Activated CD4-positive, alpha-beta memory T cell treated with anti-CD3 and anti-CD28 coated beads for 36 hours (primary cell): ENCODE measurements at regions of chrX and their contacts with region 1.

Region 1: DNA sequence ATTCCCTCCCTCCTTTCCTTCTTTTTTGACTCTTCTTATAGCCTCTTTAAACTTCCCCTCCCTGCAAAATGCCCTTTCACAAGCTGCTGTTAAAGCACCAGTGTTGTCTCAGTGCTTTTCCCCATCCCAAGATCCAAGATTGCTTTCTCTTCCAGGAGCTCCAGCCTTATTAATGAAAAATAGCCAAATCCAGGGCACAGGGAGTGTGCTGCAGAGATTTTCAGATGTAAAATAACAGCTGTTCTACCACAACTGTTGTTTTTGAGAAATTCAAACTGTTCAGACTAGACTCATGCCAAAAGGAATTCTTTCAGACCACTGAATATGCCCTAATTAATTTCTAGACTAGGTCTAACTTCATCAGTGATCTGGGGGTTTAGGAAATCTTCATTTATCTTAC is 47.0 kb upstream of the GPC3 start:
- DNase-seq: no peak
- H3K4me3 Mint-ChIP-seq: no peak overlapping the region
- H3K27ac Mint-ChIP-seq: no peak overlapping the region
- H3K4me1 Mint-ChIP-seq: no peaks in the 10 kb centered on the region
- H3K27me3 Mint-ChIP-seq: no peaks in the 10 kb centered on the region

Region 2: GRCh38 chrX:134020910-134021309 is 11.5 kb before region 1 on chrX:
- CTCF ChIA-PET with region 1: no interaction called
- POLR2A ChIA-PET with region 1: no interaction called
- intact Hi-C with region 1: no loop called
- DNase-seq: no peak
- H3K4me3 Mint-ChIP-seq: no peak overlapping the region
- H3K27ac Mint-ChIP-seq: no peak overlapping the region
- H3K4me1 Mint-ChIP-seq: no peaks in the 10 kb centered on the region
- H3K27me3 Mint-ChIP-seq: peaks cover 3% of the 10 kb centered on the region

Region 3: DNA sequence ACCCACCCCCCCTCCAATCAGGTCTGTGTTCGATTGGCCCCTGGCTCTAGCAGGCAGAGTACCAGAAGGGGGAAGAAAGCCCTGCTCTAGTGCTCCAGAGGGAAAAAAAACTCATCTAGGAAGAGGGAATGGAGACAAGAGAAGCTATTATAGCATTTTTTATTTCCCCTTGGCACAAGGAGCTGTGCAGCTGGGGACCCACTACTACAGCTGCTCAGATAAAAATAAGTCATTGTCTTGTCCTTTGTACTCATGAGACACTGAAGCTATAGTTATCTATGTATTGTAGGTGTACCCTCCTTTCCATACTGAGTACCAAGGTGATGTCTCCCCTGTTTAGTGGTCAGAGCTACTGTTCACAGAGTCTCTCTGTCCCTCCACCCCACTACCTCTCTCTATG is 218.8 kb after region 1 on chrX:
- CTCF ChIA-PET with region 1: interaction called, 5 read pairs
- POLR2A ChIA-PET with region 1: no interaction called
- intact Hi-C with region 1: loop called (anchors 10 kb)
- DNase-seq: no peak
- H3K4me3 Mint-ChIP-seq: no peak overlapping the region
- H3K27ac Mint-ChIP-seq: no peak overlapping the region
- H3K4me1 Mint-ChIP-seq: no peaks in the 10 kb centered on the region
- H3K27me3 Mint-ChIP-seq: no peaks in the 10 kb centered on the region